CD4-positive, alpha-beta T cell (primary cell): ENCODE measurements at regions of chr9 and their contacts with region 1.

Region 1: DNA sequence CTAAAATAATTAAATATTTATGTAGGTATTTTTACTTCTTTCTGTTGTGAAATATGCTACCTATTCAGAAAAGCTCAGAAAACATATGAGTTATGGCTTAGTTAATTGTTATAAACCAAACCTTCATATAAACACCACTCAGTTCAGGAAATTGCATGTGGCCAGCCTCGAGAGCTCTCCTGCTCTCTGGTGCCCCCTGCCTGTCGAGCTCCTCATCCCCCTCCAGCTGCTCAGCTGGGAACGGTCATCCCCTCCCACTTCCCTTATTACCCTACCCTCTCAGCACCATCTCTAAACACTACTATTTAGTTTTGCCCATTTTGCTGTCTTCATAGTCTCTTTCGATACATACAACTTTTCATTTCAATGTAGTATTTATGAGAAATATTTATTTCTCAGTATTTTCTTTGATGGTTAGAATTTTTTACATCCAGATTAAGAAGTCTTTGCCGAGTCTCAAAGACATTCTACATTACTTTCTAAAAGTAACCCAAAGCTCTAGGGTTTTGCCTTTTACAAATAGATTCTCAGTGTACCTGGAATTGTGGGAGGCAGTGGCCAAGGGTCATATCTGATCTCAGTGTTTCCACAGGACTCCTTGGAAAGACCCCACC is 51.2 kb upstream of the SEMA4D start:
- DNase-seq: peak; percentile 75 to 93 (median 84)
- ATAC-seq: peak; percentile 99
- H3K4me3 ChIP-seq: no peak overlapping the region
- H3K4me3 Mint-ChIP-seq: no peak overlapping the region
- H3K27ac ChIP-seq: no peak overlapping the region
- H3K27ac Mint-ChIP-seq: peak overlapping the region; percentile 40
- H3K4me1 ChIP-seq: peaks cover 15% of the 10 kb centered on the region
- H3K4me1 Mint-ChIP-seq: peaks cover 26% of the 10 kb centered on the region
- H3K27me3 ChIP-seq: no peaks in the 10 kb centered on the region
- H3K27me3 Mint-ChIP-seq: no peaks in the 10 kb centered on the region
- CTCF ChIP-seq: peak; percentile 99

Region 2: GRCh38 chr9:89388084-89388867 is 160.9 kb before region 1 on chr9:
- CTCF ChIA-PET with region 1: no interaction called
- POLR2A ChIA-PET with region 1: no interaction called
- intact Hi-C with region 1: no loop called
- DNase-seq: peak in 3 of 14 experiments; percentile 36 to 72 (median 66)
- ATAC-seq: no peak
- H3K4me3 ChIP-seq: no peak overlapping the region
- H3K4me3 Mint-ChIP-seq: no peak overlapping the region
- H3K27ac ChIP-seq: no peak overlapping the region
- H3K27ac Mint-ChIP-seq: no peak overlapping the region
- H3K4me1 ChIP-seq: peaks cover 5% of the 10 kb centered on the region
- H3K4me1 Mint-ChIP-seq: peaks cover 2% of the 10 kb centered on the region
- H3K27me3 ChIP-seq: no peaks in the 10 kb centered on the region
- H3K27me3 Mint-ChIP-seq: no peaks in the 10 kb centered on the region
- CTCF ChIP-seq: no peak

Region 3: GRCh38 chr9:89410641-89411350 is 138.3 kb before region 1 on chr9:
- CTCF ChIA-PET with region 1: interaction called, 20 read pairs
- POLR2A ChIA-PET with region 1: interaction called, 14 read pairs
- intact Hi-C with region 1: loop called in 1 of 2 experiments (anchors 5 kb)
- DNase-seq: peak in 6 of 14 experiments; percentile 16 to 74 (median 52)
- ATAC-seq: peak; percentile 44
- H3K4me3 ChIP-seq: no peak overlapping the region
- H3K4me3 Mint-ChIP-seq: peak overlapping the region; percentile 49
- H3K27ac ChIP-seq: peak overlapping the region in 1 of 2 donors; percentile 46
- H3K27ac Mint-ChIP-seq: peak overlapping the region; percentile 87
- H3K4me1 ChIP-seq: peaks cover 96% of the 10 kb centered on the region
- H3K4me1 Mint-ChIP-seq: peaks cover 98% of the 10 kb centered on the region
- H3K27me3 ChIP-seq: no peaks in the 10 kb centered on the region
- H3K27me3 Mint-ChIP-seq: no peaks in the 10 kb centered on the region
- CTCF ChIP-seq: no peak

Region 4: GRCh38 chr9:89442981-89443814 is 105.9 kb before region 1 on chr9:
- CTCF ChIA-PET with region 1: interaction called, 12 read pairs
- POLR2A ChIA-PET with region 1: interaction called, 16 read pairs
- intact Hi-C with region 1: no loop called
- DNase-seq: peak in 2 of 14 experiments; percentile 49 to 60
- ATAC-seq: no peak
- H3K4me3 ChIP-seq: no peak overlapping the region
- H3K4me3 Mint-ChIP-seq: no peak overlapping the region
- H3K27ac ChIP-seq: peak overlapping the region; percentile 66 to 71
- H3K27ac Mint-ChIP-seq: peak overlapping the region; percentile 96
- H3K4me1 ChIP-seq: peaks cover 99% of the 10 kb centered on the region
- H3K4me1 Mint-ChIP-seq: peaks cover 86% of the 10 kb centered on the region
- H3K27me3 ChIP-seq: no peaks in the 10 kb centered on the region
- H3K27me3 Mint-ChIP-seq: no peaks in the 10 kb centered on the region
- CTCF ChIP-seq: no peak

Region 5: DNA sequence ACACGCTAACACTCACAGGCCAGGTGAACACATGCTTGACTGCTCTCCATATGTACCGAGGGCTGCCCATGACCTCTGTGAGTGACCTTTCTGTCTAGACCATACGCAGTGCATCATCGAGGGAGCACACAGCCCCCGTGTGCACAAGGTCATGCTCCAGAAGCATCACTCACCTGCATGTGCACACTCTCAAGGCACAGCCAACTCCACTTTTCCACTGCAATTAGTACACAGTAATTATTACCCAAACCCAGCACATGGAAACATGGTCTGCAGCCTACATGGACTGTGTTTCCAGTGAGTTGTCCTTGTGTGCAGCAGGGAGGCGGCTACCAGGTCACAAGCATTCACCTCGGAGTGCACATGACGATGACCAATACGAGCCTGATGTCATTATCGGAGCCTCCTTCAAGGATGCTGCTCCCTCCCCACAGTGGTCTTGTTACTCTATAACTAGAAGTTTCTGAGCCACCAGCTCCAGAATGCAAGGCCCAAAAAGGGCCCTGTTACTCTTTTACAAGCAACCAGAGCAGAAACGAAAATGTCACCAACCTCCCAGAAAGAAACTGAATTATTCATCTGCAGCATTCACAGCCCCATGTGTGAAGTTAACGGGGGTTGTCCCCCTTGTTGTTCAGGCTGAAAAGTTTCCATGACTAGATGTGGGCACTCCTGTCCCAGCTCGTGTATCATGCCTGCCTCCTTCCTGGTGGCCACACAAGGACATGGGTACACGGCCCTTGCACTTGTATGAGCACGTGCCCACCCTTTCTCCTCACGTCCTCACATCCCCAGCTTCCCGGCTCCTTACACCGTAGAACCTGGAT is 82.5 kb before region 1 on chr9:
- CTCF ChIA-PET with region 1: interaction called, 18 read pairs
- POLR2A ChIA-PET with region 1: interaction called, 14 read pairs
- intact Hi-C with region 1: no loop called
- DNase-seq: peak in 2 of 14 experiments; percentile 43 to 52
- ATAC-seq: peak; percentile 2
- H3K4me3 ChIP-seq: peak overlapping the region; percentile 12
- H3K4me3 Mint-ChIP-seq: peak overlapping the region; percentile 76
- H3K27ac ChIP-seq: peak overlapping the region; percentile 64 to 84
- H3K27ac Mint-ChIP-seq: peak overlapping the region; percentile 96
- H3K4me1 ChIP-seq: peaks cover 93% of the 10 kb centered on the region
- H3K4me1 Mint-ChIP-seq: peaks cover 97% of the 10 kb centered on the region
- H3K27me3 ChIP-seq: no peaks in the 10 kb centered on the region
- H3K27me3 Mint-ChIP-seq: no peaks in the 10 kb centered on the region
- CTCF ChIP-seq: no peak

Region 6: DNA sequence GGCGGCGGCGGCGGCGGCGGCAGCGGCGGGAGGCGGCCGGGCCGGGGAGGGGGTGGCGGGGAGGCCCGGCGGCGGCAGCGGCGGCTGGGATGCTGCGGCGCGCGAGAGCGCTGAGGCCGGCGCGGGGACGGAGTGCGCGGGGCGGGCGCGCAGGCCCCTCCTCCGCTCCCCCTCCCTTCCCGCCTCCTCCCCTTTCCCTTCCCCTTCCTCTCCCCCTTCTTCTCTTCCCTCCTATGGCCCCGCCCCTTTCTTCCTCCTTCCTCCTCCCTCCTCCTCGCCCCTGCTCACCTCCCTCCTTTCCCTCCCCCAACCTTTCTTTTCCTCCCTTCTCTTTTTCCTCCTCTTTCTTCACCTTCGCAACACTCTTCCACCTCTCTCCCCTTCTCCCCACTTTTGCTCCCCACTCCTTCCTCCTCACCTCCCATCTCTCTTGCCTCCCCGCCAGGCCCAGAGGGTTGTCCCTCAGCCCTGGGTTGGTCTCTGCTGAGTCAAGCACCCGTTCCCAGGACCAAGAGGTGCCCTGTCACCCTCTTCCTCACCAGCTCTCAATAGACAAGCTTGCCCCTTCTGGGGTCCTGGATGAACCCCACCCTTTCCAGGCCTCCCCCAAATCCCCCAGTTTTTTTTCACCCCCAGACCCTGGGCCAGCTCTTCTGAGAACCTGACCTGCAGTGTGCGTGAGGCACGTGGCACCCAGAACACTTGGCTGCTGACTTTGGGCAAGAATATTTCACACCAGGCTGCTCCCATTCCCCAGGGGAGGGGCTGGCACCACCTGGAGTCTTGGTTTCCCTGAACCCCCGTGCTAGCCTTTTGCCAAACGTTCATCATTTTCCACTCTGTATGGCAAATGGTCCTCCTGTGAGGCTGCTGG is 50.9 kb before region 1 on chr9 and contains the start of gene SEMA4D:
- CTCF ChIA-PET with region 1: interaction called, 19 read pairs
- POLR2A ChIA-PET with region 1: interaction called, 10 read pairs
- intact Hi-C with region 1: loop called (anchors 2 kb)
- DNase-seq: peak in 12 of 14 experiments; percentile 37 to 84 (median 58)
- ATAC-seq: peak; percentile 4
- H3K4me3 ChIP-seq: peak within 1 kb of the TSS; percentile 83
- H3K4me3 Mint-ChIP-seq: peak within 1 kb of the TSS; percentile 100
- H3K27ac ChIP-seq: peak within 1 kb of the TSS; percentile 60 to 68
- H3K27ac Mint-ChIP-seq: peak within 1 kb of the TSS; percentile 90
- H3K4me1 ChIP-seq: peaks cover 84% of the 10 kb centered on the region
- H3K4me1 Mint-ChIP-seq: peaks cover 92% of the 10 kb centered on the region
- H3K27me3 ChIP-seq: no peaks in the 10 kb centered on the region
- H3K27me3 Mint-ChIP-seq: no peaks in the 10 kb centered on the region
- CTCF ChIP-seq: no peak
- total RNA-seq, gene SEMA4D: 399 to 430 TPM

Region 7: DNA sequence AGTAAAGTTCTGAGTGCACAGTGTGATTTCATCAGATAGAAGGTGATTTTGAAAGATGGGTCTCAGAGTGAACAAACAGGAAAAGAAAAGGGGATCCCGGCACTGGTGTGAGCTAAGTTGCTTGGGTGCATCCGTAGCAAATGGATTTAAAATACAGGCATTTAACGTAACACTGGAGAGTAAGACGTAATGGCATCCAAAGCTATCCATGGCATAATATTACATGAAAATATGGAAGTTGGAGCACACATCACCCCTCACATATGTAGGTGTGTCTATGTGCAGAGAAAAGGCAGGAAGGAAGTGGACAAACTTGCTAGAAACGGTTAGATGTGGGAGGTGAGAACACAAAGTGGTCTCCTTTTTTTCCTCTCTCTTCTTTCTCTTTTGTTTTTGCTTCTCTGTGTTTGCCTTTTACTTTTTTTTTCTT is 13.0 kb before region 1 on chr9:
- CTCF ChIA-PET with region 1: interaction called, 31 read pairs
- POLR2A ChIA-PET with region 1: interaction called, 12 read pairs
- intact Hi-C with region 1: no loop called
- DNase-seq: peak in 3 of 14 experiments; percentile 65 to 90 (median 66)
- ATAC-seq: peak; percentile 79
- H3K4me3 ChIP-seq: peak overlapping the region; percentile 11
- H3K4me3 Mint-ChIP-seq: peak overlapping the region; percentile 76
- H3K27ac ChIP-seq: peak overlapping the region; percentile 72 to 75
- H3K27ac Mint-ChIP-seq: peak overlapping the region; percentile 94
- H3K4me1 ChIP-seq: peaks cover 89% of the 10 kb centered on the region
- H3K4me1 Mint-ChIP-seq: peaks cover 95% of the 10 kb centered on the region
- H3K27me3 ChIP-seq: no peaks in the 10 kb centered on the region
- H3K27me3 Mint-ChIP-seq: no peaks in the 10 kb centered on the region
- CTCF ChIP-seq: no peak

Region 8: DNA sequence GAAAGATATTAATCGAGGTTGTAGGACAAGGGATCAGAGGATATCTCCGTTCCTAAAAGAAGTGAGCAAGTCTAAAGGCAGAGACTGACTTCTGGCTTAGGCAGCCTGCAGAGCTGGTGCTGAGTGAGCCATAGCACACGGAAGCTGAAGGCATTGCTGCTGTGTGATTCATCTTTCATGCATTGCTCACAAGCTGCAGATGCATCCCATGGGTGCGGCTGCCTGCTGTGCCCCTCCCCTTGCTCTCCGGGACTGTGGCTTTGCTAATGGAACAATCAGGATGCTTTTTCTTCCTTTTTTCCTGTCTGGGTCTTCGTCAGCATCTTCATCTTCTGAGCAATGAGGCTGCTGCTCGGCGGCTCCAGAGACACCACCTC is 752.1 kb after region 1 on chr9:
- CTCF ChIA-PET with region 1: no interaction called
- POLR2A ChIA-PET with region 1: no interaction called
- intact Hi-C with region 1: no loop called
- DNase-seq: no peak
- ATAC-seq: no peak
- H3K4me3 ChIP-seq: no peak overlapping the region
- H3K4me3 Mint-ChIP-seq: no peak overlapping the region
- H3K27ac ChIP-seq: no peak overlapping the region
- H3K27ac Mint-ChIP-seq: no peak overlapping the region
- H3K4me1 ChIP-seq: no peaks in the 10 kb centered on the region
- H3K4me1 Mint-ChIP-seq: no peaks in the 10 kb centered on the region
- H3K27me3 ChIP-seq: peaks cover 5 to 12% of the 10 kb centered on the region in 2 experiments
- H3K27me3 Mint-ChIP-seq: peaks cover 48% of the 10 kb centered on the region
- CTCF ChIP-seq: no peak